Posterior cingulate gyrus (tissue), 11 donors: ENCODE measurements at regions of chr14 and their contacts with region 1.

Region 1: GRCh38 chr14:24114536-24115450 is at the starts of genes DCAF11 and NRL:
- DNase-seq: peak; percentile 96 to 100 (median 97)

Region 2: GRCh38 chr14:24141097-24141880 is 26.5 kb after region 1 on chr14 and contains the start of gene EMC9:
- intact Hi-C with region 1: loop called (anchors 2 kb)
- DNase-seq: peak; percentile 99 to 100 (median 100)

Region 3: DNA sequence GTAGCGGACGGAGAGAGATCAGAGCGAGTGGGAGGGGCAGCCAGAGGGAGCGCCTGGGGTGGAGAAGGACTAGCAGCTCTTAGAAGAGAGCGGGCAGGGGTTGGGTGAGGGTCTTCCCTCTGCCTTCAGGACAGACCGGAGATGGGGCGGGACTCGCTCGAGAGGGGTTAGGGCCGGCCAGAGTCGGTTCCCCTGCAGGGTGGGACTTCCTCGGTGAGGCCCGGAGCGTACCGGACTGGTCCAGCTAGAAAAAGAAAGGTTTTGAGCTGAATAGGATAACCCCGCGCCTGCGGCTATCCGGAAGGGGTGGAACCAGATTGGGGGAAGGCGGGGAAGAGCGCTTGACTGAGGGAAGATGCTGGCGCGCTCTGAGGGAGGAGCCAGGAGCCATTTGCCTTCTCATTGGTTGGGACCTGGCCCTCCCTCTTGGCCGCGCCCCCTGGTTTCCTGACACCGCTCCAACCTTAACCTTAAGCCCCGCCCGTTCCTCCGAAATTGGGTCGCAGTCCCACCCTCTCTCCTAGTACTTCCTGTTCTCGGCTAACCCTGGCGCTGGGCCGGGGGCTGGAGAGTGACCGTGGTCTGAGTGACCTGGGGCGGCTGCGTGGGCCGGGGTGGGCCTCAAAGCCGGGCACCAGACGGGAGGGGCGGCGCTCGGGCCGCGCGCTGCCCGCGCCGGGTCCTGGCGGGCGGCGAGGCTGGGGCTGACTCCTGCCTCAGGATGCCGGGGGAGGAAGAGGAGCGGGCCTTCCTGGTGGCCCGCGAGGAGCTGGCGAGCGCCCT is 32.4 kb after region 1 on chr14 and contains the start of gene RNF31:
- intact Hi-C with region 1: loop called (anchors 1 kb)
- DNase-seq: peak; percentile 96 to 100 (median 98)

Region 4: DNA sequence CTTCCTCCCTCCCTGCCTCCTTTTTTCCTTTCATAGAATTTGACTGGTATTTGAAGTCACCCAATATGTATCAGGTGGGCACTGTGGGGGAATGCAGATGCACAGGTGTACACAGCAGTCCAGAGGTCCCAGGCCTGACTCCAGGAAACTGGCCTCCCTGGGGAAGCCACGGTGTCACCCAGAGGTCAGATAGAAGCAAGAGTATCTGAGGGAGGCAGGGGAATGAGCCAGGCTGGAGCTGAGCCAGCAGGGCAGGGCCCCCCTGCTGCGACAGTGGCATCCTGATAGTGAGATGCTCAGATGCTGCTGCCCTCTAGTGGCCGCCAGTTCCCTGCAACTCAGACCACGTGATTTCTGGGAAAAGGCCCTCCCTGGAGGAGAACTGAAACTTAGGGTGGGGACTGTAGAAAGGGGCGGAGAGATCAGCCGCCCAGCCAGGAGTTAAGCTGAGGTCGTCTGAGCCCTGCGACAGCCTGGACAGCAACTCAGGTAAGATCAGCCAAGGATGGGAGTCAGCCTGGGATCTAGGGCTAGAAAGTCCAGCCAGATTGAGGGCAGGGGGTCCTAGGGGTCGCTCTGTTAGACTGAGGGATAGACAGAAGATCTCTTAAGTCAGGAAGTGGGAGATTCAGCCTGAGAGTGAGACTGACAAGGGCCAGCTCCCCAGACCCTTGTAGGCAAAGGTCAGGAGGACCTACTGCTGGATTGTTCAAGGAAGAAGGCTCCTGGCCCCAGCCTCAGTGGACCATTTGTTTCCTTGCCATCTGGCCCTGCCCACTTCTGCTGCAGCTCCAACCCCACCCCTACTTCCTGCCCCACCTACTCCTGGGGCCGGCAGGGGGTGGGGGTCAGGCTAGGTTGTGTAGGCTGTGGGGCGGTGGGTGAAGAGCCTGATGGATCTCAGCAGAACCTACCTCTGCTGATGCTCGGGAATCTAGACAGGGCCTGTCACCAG is 46.3 kb after region 1 on chr14 and contains the start of gene IRF9:
- intact Hi-C with region 1: loop called (anchors 1 kb)
- DNase-seq: peak; percentile 92 to 99 (median 97)